ENCODE measurements at regions of chr1 and their contacts with region 1.

Region 1: GRCh38 chr1:24391882-24392603 is 21.5 kb downstream of the STPG1 start:
- DNase-seq: peak; percentile 75
- H3K4me3 ChIP-seq: peak overlapping the region in 1 of 3 experiments; percentile 32
- H3K27ac ChIP-seq: peak overlapping the region; percentile 32
- H3K4me1 ChIP-seq: peaks cover 40% of the 10 kb centered on the region
- H3K27me3 ChIP-seq: no peaks in the 10 kb centered on the region
- CTCF ChIP-seq: peak; percentile 91 to 92
- POLR2A ChIP-seq: no peak

Region 2: DNA sequence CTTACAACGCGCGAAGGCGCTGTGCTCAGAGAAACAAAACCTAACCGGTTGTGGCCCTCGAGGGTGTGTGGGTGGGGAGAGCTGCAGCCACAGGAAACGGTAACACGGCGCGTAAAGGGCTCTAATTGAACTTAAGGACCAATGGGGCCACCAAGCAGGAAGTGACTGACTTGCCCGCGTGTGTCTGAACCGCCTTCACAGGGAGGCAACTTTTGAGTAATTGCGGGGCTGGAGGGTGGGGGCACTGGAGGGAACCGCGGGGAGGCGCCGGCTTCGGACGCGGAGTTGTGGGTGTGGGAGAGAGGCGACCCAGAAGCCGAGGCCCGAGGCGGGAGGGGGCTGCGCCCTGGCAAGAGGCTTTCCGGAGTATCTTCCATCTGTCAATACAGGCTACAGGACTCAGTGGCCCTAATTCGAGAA is 433.0 kb before region 1 on chr1:
- CTCF ChIA-PET with region 1: no interaction called
- POLR2A ChIA-PET with region 1: no interaction called
- dilution Hi-C with region 1: no loop called
- intact Hi-C with region 1: loop called (anchors 5 kb)
- DNase-seq: peak; percentile 93
- H3K4me3 ChIP-seq: peak overlapping the region; percentile 43 to 67 (median 58)
- H3K27ac ChIP-seq: peak overlapping the region; percentile 96
- H3K4me1 ChIP-seq: peaks cover 26% of the 10 kb centered on the region
- H3K27me3 ChIP-seq: no peaks in the 10 kb centered on the region
- CTCF ChIP-seq: peak; percentile 17 to 38
- POLR2A ChIP-seq: peak; percentile 13

Region 3: DNA sequence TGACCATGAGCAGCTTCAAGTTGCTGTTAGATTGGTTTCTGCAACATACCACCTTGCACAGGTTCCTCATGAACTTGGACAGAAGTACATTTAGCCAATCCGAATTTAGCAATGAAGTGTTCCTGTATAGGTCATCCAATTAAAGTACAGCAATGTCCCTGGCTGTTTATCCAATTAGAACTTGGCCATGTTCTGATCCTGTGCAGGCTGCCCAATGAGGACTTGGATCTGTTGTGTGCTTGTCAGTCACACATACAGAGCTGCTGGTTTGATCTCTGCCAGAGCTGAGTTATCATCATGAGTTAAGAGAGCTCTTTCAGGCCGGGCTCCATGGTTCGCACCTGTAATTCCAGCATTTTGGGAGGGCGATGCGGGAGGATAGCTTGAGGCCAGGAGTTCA is 183.0 kb before region 1 on chr1:
- CTCF ChIA-PET with region 1: interaction called, 66 read pairs
- POLR2A ChIA-PET with region 1: no interaction called
- dilution Hi-C with region 1: no loop called
- intact Hi-C with region 1: no loop called
- DNase-seq: no peak
- H3K4me3 ChIP-seq: no peak overlapping the region
- H3K27ac ChIP-seq: no peak overlapping the region
- H3K4me1 ChIP-seq: no peaks in the 10 kb centered on the region
- H3K27me3 ChIP-seq: peaks cover 0 to 3% of the 10 kb centered on the region in 2 experiments
- CTCF ChIP-seq: no peak
- POLR2A ChIP-seq: no peak

Region 4: GRCh38 chr1:24379733-24380315 is 12.2 kb before region 1 on chr1:
- CTCF ChIA-PET with region 1: interaction called, 26 read pairs
- POLR2A ChIA-PET with region 1: no interaction called
- dilution Hi-C with region 1: no loop called
- intact Hi-C with region 1: no loop called
- DNase-seq: no peak
- H3K4me3 ChIP-seq: no peak overlapping the region
- H3K27ac ChIP-seq: no peak overlapping the region
- H3K4me1 ChIP-seq: peaks cover 9% of the 10 kb centered on the region
- H3K27me3 ChIP-seq: no peaks in the 10 kb centered on the region
- CTCF ChIP-seq: no peak
- POLR2A ChIP-seq: no peak

Region 5: DNA sequence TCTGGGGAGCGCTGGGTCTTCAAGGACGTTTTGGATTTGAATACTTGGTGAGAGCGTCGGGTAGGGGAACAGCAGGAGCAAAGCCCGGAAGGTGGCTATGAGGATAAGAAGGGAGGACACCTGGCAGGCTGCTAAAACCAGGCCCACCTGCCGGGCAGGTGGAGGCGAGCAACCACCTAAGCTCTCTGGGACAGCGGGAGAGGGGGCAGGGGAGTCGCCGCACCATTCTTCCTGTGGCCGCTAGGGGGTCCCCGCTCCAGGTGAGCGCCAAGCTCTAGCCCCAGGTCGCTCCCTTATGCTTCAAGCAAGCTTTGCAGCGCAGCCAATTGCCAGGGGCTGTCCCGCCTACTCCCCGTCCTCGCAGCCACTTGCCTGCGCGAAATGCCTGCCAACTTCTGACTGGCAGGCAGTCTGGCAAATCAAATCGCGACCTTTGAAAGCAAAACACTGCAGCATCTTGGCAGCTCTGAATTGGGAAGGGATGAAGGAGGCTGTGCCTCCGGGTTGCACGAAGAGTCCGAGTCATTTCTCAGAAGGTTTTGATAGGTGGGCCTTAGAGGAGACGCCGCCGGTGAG is 23.4 kb after region 1 on chr1 and contains the start of gene NIPAL3:
- CTCF ChIA-PET with region 1: interaction called, 134 read pairs
- POLR2A ChIA-PET with region 1: interaction called, 6 read pairs
- dilution Hi-C with region 1: no loop called
- intact Hi-C with region 1: loop called (anchors 1 kb)
- DNase-seq: peak; percentile 98
- H3K4me3 ChIP-seq: peak within 1 kb of the TSS; percentile 66 to 91 (median 70)
- H3K27ac ChIP-seq: no peak within 1 kb of the TSS
- H3K4me1 ChIP-seq: peaks cover 20% of the 10 kb centered on the region
- H3K27me3 ChIP-seq: no peaks in the 10 kb centered on the region
- CTCF ChIP-seq: peak; percentile 61 to 93
- POLR2A ChIP-seq: peak; percentile 35
- total RNA-seq, gene NIPAL3: 14.8 and 16.0 TPM in 2 replicates

Region 6: GRCh38 chr1:24635195-24635843 is 243.3 kb after region 1 on chr1:
- CTCF ChIA-PET with region 1: interaction called, 9 read pairs
- POLR2A ChIA-PET with region 1: no interaction called
- dilution Hi-C with region 1: no loop called
- intact Hi-C with region 1: loop called (anchors 1 kb)
- DNase-seq: peak; percentile 79
- H3K4me3 ChIP-seq: no peak overlapping the region
- H3K27ac ChIP-seq: no peak overlapping the region
- H3K4me1 ChIP-seq: no peaks in the 10 kb centered on the region
- H3K27me3 ChIP-seq: peaks cover 8 to 14% of the 10 kb centered on the region in 2 experiments
- CTCF ChIP-seq: peak; percentile 36 to 44
- POLR2A ChIP-seq: no peak

Measured in endothelial cell of umbilical vein (primary cell).